ENCODE measurements at regions of chr1 and their contacts with region 1.

Region 1: GRCh38 chr1:154263465-154264332 is 8.7 kb upstream of the HAX1 start:
- DNase-seq: no peak
- ATAC-seq: no peak
- H3K4me3 ChIP-seq: no peak overlapping the region
- H3K27ac ChIP-seq: no peak overlapping the region
- H3K4me1 ChIP-seq: no peaks in the 10 kb centered on the region
- H3K27me3 ChIP-seq: no peaks in the 10 kb centered on the region
- CTCF ChIP-seq: no peak

Region 2: GRCh38 chr1:153805042-153805745 is 458.5 kb before region 1 on chr1:
- intact Hi-C with region 1: loop called in 1 of 2 experiments (anchors 10 kb)
- DNase-seq: peak; percentile 34 to 71
- ATAC-seq: peak; percentile 62 to 88 (median 82)
- H3K4me3 ChIP-seq: no peak overlapping the region
- H3K27ac ChIP-seq: no peak overlapping the region
- H3K4me1 ChIP-seq: peaks cover 5% of the 10 kb centered on the region
- H3K27me3 ChIP-seq: no peaks in the 10 kb centered on the region
- CTCF ChIP-seq: no peak

Region 3: GRCh38 chr1:154157520-154158306 is 106.0 kb before region 1 on chr1:
- intact Hi-C with region 1: no loop called
- DNase-seq: no peak
- ATAC-seq: no peak
- H3K4me3 ChIP-seq: no peak overlapping the region
- H3K27ac ChIP-seq: peak overlapping the region; percentile 44
- H3K4me1 ChIP-seq: peaks cover 8% of the 10 kb centered on the region
- H3K27me3 ChIP-seq: no peaks in the 10 kb centered on the region
- CTCF ChIP-seq: no peak

Region 4: DNA sequence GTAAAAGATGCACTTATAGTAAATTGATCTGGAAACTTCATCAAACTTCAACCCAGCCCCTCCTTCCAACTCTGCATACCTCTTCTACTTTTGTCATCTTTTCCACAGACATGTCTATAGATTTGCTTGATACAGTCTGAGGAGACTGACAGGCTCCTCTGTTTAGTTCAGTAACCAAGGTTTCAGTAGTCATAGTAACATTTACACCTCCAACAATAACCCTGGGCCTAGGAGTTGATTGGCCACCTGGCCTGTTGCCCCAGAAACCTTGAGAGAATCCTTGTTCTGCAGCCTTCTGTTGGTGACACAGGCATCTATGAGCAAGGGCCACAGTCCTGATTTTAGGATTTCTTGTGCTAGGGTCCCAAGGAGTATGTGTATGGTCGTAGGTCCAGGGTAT is 57.5 kb before region 1 on chr1 and contains the start of gene CFAP141:
- intact Hi-C with region 1: loop called in 1 of 2 experiments (anchors 10 kb)
- DNase-seq: no peak
- ATAC-seq: no peak
- H3K4me3 ChIP-seq: no peak within 1 kb of the TSS
- H3K27ac ChIP-seq: no peak within 1 kb of the TSS
- H3K4me1 ChIP-seq: peaks cover 7% of the 10 kb centered on the region
- H3K27me3 ChIP-seq: no peaks in the 10 kb centered on the region
- CTCF ChIP-seq: no peak
- total RNA-seq, gene CFAP141: not detected

Region 5: DNA sequence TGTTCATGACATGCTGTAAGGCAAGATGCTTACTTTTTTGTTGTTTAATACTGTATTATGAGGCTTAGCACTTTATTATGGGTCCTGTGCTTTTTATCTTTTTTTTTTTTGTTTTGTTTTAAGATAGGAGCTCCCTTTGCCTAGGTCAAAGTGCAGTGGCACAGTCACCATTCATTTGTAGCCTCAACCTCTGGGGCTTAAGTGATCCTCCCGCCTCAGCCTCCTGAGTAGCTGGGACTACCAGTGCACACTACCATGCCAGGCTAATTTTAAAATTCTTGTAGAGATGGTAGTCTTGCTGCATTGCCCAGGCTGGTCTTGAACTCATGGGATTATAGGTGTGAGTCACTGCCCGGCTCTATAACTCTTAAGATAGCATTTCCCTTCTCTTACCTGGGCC is 38.3 kb before region 1 on chr1:
- intact Hi-C with region 1: loop called (anchors 5 kb)
- DNase-seq: no peak
- ATAC-seq: no peak
- H3K4me3 ChIP-seq: no peak overlapping the region
- H3K27ac ChIP-seq: no peak overlapping the region
- H3K4me1 ChIP-seq: peaks cover 29% of the 10 kb centered on the region
- H3K27me3 ChIP-seq: no peaks in the 10 kb centered on the region
- CTCF ChIP-seq: no peak

Region 6: DNA sequence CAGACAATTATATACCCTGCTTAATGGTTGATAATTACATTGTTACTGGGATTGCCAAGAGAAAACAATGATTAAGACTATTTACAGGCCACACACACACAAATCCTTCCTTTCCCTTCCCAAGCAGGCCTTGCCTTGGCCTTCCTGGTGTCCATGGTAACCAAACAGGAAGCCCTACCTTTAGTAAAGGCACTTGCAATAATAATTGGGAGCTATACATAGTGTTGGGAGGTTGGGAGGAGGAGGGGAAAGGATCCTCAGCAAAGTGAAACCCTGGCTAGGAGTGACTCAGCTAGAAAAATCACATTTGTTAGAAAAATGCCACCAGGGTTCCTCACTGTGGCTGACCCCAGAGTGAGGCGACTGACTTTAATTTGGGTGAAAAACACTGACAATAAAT is 466.6 kb after region 1 on chr1:
- intact Hi-C with region 1: no loop called
- DNase-seq: no peak
- ATAC-seq: no peak
- H3K4me3 ChIP-seq: no peak overlapping the region
- H3K27ac ChIP-seq: peak overlapping the region; percentile 57
- H3K4me1 ChIP-seq: peaks cover 23% of the 10 kb centered on the region
- H3K27me3 ChIP-seq: no peaks in the 10 kb centered on the region
- CTCF ChIP-seq: no peak

Measured in psoas muscle (tissue), 8 donors.